ENCODE measurements at regions of chr22 and their contacts with region 1.

Region 1: DNA sequence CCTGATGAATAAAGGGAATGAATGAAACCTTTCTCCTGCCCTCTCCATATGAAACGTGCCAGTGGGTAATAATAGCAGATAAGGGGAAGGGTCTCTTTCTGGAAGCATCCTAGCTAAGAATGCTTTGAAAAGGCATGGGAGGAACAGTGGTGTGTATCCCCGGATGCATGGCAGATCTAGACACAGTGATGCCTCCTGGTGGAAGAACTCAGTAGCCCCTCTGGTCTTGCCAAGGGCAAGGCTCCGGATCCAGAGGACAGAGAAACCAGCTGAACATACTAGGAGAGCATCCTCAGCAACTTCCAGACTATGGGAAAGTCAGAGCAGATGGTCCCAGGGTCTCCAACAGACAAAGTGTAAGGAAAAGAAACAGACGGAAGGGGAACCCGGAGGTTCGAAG is 6.4 kb downstream of the BAIAP2L2 start:
- DNase-seq: no peak
- H3K4me3 ChIP-seq: no peak overlapping the region
- H3K27ac ChIP-seq: no peak overlapping the region
- H3K4me1 ChIP-seq: peaks cover 0 to 13% (median 5%) of the 10 kb centered on the region in 3 donors
- H3K27me3 ChIP-seq: no peaks in the 10 kb centered on the region
- CTCF ChIP-seq: peak in 3 of 6 experiments; percentile 22 to 32 (median 32)
- POLR2A ChIP-seq: no peak

Region 2: GRCh38 chr22:37792494-37792893 is 311.6 kb before region 1 on chr22:
- intact Hi-C with region 1: no loop called
- DNase-seq: no peak
- H3K4me3 ChIP-seq: no peak overlapping the region
- H3K27ac ChIP-seq: peak overlapping the region in 1 of 4 donors; percentile 25
- H3K4me1 ChIP-seq: peaks cover 0 to 9% (median 0%) of the 10 kb centered on the region in 3 donors
- H3K27me3 ChIP-seq: no peaks in the 10 kb centered on the region
- CTCF ChIP-seq: no peak
- POLR2A ChIP-seq: no peak

Region 3: DNA sequence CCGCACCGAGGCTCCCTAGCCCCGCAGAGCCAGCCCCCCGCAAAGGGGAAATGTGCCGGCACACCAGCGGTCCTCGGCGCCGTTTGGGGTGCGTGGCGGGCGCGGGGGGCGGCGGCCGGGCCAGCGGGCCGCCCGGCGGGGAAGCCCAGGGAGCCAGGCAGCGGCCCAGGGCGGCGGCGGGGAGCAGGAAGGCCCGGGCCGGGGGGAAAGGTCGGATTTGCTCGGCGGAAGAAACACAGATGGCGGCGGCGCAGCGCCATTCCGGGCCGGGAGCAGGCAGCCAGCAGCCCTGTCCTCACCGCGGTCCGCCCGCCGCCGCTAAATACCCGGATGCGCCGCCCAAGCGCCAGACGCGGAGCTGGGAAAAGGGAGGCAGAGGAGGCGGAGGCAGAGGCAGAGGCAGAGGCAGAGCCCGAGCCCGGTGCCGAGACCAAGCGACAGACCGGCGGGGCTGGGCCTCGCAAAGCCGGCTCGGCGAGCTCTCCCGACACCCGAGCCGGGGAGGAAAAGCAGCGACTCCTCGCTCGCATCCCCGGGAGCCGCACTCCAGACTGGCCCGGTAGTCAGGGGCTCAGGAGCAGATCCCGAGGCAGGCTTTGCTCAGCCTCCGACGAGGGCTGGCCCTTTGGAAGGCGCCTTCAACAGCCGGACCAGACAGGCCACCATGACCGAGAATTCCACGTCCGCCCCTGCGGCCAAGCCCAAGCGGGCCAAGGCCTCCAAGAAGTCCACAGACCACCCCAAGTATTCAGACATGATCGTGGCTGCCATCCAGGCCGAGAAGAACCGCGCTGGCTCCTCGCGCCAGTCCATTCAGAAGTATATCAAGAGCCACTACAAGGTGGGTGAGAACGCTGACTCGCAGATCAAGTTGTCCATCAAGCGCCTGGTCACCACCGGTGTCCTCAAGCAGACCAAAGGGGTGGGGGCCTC is 298.9 kb before region 1 on chr22:
- intact Hi-C with region 1: no loop called
- DNase-seq: no peak
- H3K4me3 ChIP-seq: peak overlapping the region; percentile 51 to 69 (median 62)
- H3K27ac ChIP-seq: peak overlapping the region; percentile 86 to 94 (median 88)
- H3K4me1 ChIP-seq: peaks cover 38 to 72% (median 43%) of the 10 kb centered on the region in 3 donors
- H3K27me3 ChIP-seq: peaks cover 0 to 6% (median 0%) of the 10 kb centered on the region in 4 donors
- CTCF ChIP-seq: peak in 1 of 6 experiments; percentile 14
- POLR2A ChIP-seq: peak in 2 of 4 donors; percentile 90 to 95

Region 4: GRCh38 chr22:38228873-38229740 is 125.0 kb after region 1 on chr22:
- intact Hi-C with region 1: loop called (anchors 10 kb)
- DNase-seq: no peak
- H3K4me3 ChIP-seq: peak overlapping the region in 1 of 4 donors; percentile 0
- H3K27ac ChIP-seq: peak overlapping the region; percentile 87 to 93 (median 89)
- H3K4me1 ChIP-seq: peaks cover 24 to 52% (median 27%) of the 10 kb centered on the region in 3 donors
- H3K27me3 ChIP-seq: no peaks in the 10 kb centered on the region
- CTCF ChIP-seq: peak in 1 of 6 experiments; percentile 12
- POLR2A ChIP-seq: no peak

Region 5: GRCh38 chr22:38623351-38623750 is 519.3 kb after region 1 on chr22:
- intact Hi-C with region 1: no loop called
- DNase-seq: no peak
- H3K4me3 ChIP-seq: no peak overlapping the region
- H3K27ac ChIP-seq: no peak overlapping the region
- H3K4me1 ChIP-seq: no peaks in the 10 kb centered on the region
- H3K27me3 ChIP-seq: no peaks in the 10 kb centered on the region
- CTCF ChIP-seq: no peak
- POLR2A ChIP-seq: no peak

Measured in esophagus squamous epithelium (tissue), 5 donors.